OCI-LY7 (cell line): ENCODE measurements at regions of chr20 and their contacts with region 1.

Region 1: GRCh38 chr20:2651772-2652723 is at the start of gene NOP56:
- DNase-seq: peak; percentile 94
- H3K4me3 ChIP-seq: peak within 1 kb of the TSS; percentile 93
- H3K27ac ChIP-seq: peak within 1 kb of the TSS; percentile 88
- H3K4me1 ChIP-seq: peaks cover 27% of the 10 kb centered on the region
- CTCF ChIP-seq: no peak
- total RNA-seq, gene NOP56: 580 and 640 TPM in 2 replicates

Region 2: DNA sequence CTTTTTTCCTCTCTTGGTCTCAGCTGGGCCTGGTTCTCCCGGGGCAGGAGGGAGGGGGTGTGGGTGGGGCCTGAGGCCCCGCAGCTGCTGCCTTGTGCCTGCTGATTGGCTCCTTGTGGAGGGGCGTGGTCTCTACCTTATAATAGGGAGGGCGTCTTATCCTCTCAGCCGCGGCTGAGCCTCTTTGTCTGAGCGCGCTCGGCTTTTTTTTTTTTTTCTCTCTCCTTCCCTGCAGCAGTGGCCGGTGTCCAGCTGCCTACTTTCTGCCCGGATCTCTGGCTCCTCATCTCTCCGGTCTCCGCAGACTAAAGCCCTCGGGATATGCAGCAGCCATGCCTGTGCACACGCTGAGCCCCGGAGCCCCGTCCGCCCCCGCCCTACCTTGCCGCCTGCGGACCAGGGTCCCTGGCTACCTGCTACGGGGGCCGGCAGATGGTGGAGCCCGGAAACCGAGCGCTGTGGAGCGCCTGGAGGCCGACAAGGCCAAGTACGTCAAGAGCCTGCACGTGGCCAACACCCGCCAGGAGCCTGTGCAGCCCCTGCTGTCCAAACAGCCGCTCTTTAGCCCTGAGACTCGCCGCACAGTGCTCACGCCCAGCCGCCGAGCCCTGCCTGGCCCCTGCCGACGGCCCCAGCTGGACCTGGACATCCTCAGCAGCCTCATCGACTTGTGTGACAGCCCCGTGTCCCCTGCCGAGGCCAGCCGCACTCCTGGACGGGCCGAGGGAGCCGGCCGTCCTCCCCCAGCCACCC is 1807.4 kb before region 1 on chr20:
- CTCF ChIA-PET with region 1: no interaction called
- POLR2A ChIA-PET with region 1: no interaction called
- intact Hi-C with region 1: loop called (anchors 5 kb)
- DNase-seq: peak; percentile 95
- H3K4me3 ChIP-seq: peak overlapping the region; percentile 77
- H3K27ac ChIP-seq: peak overlapping the region; percentile 80
- H3K4me1 ChIP-seq: peaks cover 65% of the 10 kb centered on the region
- CTCF ChIP-seq: no peak

Region 3: DNA sequence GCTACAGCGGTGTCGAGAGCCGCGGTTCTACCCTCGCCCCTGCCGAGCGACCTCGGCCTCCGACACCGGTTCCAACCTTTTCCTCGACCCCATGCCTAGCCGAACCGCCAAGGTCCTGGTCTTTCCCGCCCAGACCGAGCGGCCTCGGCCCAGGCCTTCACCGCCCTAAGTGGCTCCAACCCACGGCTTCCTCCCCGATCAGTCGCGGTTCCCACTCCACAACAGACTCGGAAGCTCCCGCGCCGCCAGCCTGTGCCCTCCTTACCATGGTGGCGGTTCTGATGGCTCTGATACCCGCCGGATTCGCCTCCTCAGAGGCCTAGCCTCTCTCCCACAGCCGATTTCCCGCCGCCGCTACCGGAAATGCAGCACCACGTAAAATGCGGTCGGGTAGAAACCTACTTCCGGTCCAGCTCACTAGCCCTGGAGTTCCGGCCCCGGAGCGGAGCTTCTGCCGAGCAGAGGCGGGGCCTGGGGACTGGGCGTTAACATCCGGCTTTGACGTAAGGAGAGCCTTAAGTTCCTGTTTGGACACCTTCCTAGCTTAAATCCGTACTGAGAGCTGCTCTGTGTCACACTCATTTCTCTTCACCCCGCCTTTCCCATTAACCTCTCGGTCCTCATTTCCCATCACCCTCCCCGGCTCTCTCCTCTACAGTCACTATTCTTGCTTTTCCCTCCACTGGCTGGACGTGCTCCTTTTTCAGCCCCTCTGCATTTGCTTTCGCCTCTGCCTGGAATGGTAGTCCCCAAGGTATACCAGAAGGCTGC is 181.4 kb before region 1 on chr20 and contains the start of gene SNRPB:
- CTCF ChIA-PET with region 1: no interaction called
- POLR2A ChIA-PET with region 1: interaction called, 7 read pairs
- intact Hi-C with region 1: loop called (anchors 1 kb)
- DNase-seq: peak; percentile 99
- H3K4me3 ChIP-seq: peak within 1 kb of the TSS; percentile 99
- H3K27ac ChIP-seq: peak within 1 kb of the TSS; percentile 87
- H3K4me1 ChIP-seq: peaks cover 31% of the 10 kb centered on the region
- CTCF ChIP-seq: no peak
- total RNA-seq, gene SNRPB: 429 and 516 TPM in 2 replicates

Region 4: GRCh38 chr20:2626853-2627541 is 25.1 kb before region 1 on chr20:
- CTCF ChIA-PET with region 1: no interaction called
- POLR2A ChIA-PET with region 1: no interaction called
- intact Hi-C with region 1: no loop called
- DNase-seq: no peak
- H3K4me3 ChIP-seq: no peak overlapping the region
- H3K27ac ChIP-seq: no peak overlapping the region
- H3K4me1 ChIP-seq: no peaks in the 10 kb centered on the region
- CTCF ChIP-seq: no peak

Region 5: DNA sequence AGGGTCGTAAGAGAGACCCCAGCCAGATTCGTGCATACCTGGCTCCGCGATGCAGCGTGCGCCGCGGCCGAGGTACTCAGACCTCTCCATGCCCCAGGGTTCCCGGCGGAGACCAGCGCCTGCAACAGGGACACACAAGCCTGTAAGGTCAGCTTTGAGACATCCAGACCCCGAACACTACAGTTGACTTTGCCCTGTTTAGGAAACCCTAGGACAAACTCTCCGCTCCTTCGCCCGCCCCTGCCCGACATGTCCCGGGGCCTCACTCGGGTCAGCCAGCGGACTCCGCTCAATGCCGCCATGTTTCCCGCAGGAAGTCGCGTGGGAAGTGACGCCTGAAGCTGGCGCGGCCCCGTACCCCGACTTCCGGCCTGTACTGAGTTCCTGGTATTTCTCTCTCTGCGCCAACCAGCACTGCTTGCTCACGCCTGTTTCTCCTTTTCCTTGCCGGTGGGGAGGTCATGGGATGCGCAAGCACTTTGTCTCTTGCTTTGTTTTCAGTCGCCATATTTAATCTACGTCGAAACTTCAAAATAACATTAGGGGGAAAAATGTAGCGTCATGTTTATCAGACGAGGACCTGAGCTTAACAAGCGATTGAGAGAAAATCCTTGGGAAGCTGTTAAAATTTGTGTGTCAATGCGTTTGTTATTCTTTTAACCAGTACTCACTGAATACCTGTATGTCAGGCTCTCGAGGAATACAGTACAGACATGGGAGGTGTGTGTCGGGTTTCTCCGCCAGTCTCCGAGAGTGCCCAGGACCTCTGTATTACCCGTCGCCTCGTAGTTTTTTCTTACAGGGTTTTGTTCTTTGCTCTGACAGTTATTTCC is 12.1 kb after region 1 on chr20 and contains the start of gene IDH3B:
- CTCF ChIA-PET with region 1: no interaction called
- POLR2A ChIA-PET with region 1: interaction called, 24 read pairs
- intact Hi-C with region 1: no loop called
- DNase-seq: peak; percentile 87
- H3K4me3 ChIP-seq: peak within 1 kb of the TSS; percentile 97
- H3K27ac ChIP-seq: peak within 1 kb of the TSS; percentile 74
- H3K4me1 ChIP-seq: peaks cover 21% of the 10 kb centered on the region
- CTCF ChIP-seq: no peak
- total RNA-seq, gene IDH3B: 154 and 162 TPM in 2 replicates

Region 6: DNA sequence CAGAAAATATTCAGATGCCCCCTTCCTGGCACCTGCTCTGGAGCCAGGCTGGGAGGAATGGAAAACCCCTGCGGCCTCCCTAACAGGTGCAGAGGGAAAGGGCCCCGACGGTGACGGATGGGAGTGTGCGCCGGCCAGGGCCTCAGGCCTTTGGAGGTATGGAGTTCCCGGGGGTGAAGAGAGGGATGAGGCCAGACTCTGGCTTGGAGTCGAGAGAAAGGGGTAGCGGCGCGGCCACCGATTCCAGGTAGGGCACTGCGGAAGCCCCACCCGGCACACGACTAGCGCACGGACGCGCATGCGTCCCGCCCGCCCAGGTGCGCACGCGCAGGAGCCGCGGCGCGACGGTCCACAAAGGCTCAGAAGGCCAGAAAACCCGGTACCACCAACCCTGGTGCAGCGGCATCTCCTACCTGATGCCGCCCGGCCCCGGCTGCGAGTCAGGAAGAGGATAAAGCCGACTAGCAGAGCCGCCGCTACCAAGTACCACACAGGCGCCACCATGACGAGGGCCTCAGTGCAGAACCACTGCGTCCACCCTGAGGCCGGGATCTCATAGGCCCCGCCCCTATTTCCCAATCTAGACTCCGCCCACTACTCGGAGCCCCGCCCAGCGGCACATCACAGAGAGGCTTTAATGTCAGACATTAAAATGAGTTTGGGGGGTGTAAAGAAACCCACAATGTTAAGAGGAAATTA is 552.2 kb after region 1 on chr20 and contains the start of gene DDRGK1:
- CTCF ChIA-PET with region 1: no interaction called
- POLR2A ChIA-PET with region 1: no interaction called
- intact Hi-C with region 1: loop called (anchors 10 kb)
- DNase-seq: peak; percentile 86
- H3K4me3 ChIP-seq: peak within 1 kb of the TSS; percentile 92
- H3K27ac ChIP-seq: peak within 1 kb of the TSS; percentile 73
- H3K4me1 ChIP-seq: peaks cover 17% of the 10 kb centered on the region
- CTCF ChIP-seq: no peak
- total RNA-seq, gene DDRGK1: 35.5 and 37.7 TPM in 2 replicates

Region 7: GRCh38 chr20:3407040-3407770 is 755.2 kb after region 1 on chr20 and contains the start of gene DNAAF9:
- CTCF ChIA-PET with region 1: no interaction called
- POLR2A ChIA-PET with region 1: no interaction called
- intact Hi-C with region 1: no loop called
- DNase-seq: no peak
- H3K4me3 ChIP-seq: peak within 1 kb of the TSS; percentile 35
- H3K27ac ChIP-seq: no peak within 1 kb of the TSS
- H3K4me1 ChIP-seq: no peaks in the 10 kb centered on the region
- CTCF ChIP-seq: no peak
- total RNA-seq, gene DNAAF9: not detected in 2 replicates